ENCODE measurements at regions of chr14 and their contacts with region 1.

Region 1: GRCh38 chr14:77097700-77098528 is at the start of gene CIPC:
- DNase-seq: peak; percentile 100
- H3K4me3 ChIP-seq: peak within 1 kb of the TSS; percentile 67 to 92 (median 86)
- H3K27ac ChIP-seq: peak within 1 kb of the TSS; percentile 90 to 100 (median 96)
- H3K4me1 ChIP-seq: peaks cover 0 to 56% (median 50%) of the 10 kb centered on the region in 4 donors
- H3K27me3 ChIP-seq: no peaks in the 10 kb centered on the region
- CTCF ChIP-seq: no peak
- EP300 ChIP-seq: peak in 1 of 4 donors; percentile 86
- POLR2A ChIP-seq: peak; percentile 87 to 91
- total RNA-seq, gene CIPC: 59.7 to 96.1 (median 77.7) TPM

Region 2: GRCh38 chr14:76876076-76876475 is 221.8 kb before region 1 on chr14:
- intact Hi-C with region 1: loop called (anchors 1 kb)
- DNase-seq: peak; percentile 82
- H3K4me3 ChIP-seq: no peak overlapping the region
- H3K27ac ChIP-seq: no peak overlapping the region
- H3K4me1 ChIP-seq: no peaks in the 10 kb centered on the region
- H3K27me3 ChIP-seq: no peaks in the 10 kb centered on the region
- CTCF ChIP-seq: peak; percentile 90 to 95 (median 92)
- EP300 ChIP-seq: no peak
- POLR2A ChIP-seq: no peak

Region 3: DNA sequence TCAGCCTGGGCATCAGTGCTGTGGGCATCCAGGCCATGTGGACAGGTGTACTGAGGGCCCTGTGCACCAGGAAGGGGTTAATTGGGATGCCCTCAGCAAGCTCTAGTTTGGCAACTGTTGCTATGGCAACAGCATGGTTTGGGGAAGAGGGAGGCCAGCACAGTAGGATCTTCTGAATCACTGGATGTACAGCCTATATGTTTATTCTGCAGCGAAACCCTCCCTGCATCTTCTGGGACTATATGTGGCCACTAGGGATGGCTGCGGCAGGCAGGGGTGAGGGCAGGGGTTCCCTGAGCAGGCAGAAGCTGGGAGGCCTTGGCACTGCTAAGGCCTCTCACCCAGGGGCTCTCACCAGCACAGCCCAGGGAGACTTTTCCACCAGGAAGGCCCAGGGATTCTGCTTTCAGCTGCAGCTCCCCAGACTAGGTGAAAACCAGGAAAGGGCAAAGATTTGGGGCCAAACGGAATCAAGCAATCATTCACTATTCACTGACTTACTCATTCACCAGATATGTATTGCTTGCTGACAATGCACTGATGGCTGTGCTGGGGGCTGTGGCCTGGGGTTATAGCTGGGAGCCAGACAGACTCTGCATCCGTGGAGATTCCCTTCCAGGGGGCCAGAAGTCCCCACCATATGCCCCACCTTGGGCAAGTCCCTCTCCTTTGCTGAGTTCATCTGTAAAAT is 112.2 kb before region 1 on chr14:
- intact Hi-C with region 1: no loop called
- DNase-seq: no peak
- H3K4me3 ChIP-seq: no peak overlapping the region
- H3K27ac ChIP-seq: no peak overlapping the region
- H3K4me1 ChIP-seq: no peaks in the 10 kb centered on the region
- H3K27me3 ChIP-seq: no peaks in the 10 kb centered on the region
- CTCF ChIP-seq: no peak
- EP300 ChIP-seq: no peak
- POLR2A ChIP-seq: no peak

Region 4: DNA sequence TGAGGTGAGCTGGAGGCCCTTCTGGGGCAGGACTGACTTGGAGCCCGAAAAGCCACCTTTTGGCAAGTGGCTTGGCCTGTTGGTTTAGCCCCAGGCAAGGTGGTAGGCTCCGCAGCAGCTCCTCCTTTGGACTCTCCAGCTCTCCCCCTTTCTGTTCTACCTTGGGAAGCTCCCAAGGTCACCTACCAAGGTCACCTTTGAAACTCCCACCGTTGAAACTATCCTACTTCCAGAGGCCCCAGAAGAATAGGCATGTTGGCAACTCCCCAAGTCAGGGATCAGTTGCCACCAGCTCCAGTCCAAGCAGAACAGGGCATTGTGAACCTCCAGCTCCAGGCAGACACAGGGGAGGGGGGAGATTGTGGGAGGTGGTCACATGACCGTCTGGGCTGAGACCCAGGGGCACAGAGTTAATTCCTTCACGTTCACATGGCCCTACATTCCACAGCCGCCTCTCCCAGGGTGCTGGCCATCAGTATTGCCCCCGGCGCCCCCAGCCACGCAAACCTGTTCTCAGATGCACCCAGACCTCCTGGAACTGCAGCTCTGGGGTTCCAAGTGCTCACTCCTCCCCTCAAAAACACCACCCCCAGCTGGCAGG is 83.8 kb before region 1 on chr14:
- intact Hi-C with region 1: no loop called
- DNase-seq: peak; percentile 87
- H3K4me3 ChIP-seq: no peak overlapping the region
- H3K27ac ChIP-seq: peak overlapping the region in 3 of 4 donors; percentile 38 to 62 (median 60)
- H3K4me1 ChIP-seq: peaks cover 0 to 18% (median 15%) of the 10 kb centered on the region in 4 donors
- H3K27me3 ChIP-seq: no peaks in the 10 kb centered on the region
- CTCF ChIP-seq: no peak
- EP300 ChIP-seq: no peak
- POLR2A ChIP-seq: no peak

Region 5: DNA sequence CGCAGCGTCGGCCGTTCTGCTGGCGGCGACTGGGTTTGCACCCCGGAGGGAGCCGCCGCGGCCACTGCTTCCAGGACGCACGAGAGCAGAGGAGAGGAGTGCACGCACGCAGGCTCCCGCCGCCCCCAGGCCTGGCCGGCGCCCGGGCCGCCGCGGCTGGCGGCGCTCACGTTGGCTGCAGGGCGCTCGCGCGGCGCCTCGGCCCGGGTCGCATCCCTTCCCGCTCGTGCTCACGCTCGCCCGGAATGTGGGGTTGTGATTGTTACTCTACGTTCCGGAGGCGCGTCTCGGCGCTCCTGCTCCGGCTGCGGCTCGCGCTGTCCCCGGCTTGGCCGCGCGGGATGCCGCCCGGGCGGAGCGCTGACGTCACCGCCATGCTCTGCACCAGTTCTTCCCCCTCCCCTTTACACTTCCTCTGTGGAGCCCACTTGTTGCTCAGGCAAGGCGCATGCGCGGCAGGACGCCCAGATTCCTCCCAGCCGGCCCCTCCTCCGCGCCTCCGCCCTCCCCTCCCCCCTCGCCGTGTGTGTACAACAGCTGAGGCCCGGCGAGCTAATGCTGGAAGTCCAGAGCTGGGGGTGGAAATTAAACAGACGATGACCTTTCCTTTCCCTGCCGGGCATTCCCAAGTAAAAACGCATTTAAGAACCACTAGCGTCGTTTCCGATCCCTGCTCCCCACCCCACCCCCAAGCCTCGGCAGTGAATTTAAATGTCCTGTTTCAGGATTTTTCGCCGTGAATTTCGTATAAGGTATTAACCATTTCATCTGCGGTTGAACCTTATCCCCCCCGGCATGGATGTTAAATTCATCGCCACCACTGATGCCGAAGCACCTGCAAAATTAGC is 69.3 kb before region 1 on chr14 and contains the start of gene IRF2BPL:
- intact Hi-C with region 1: loop called (anchors 1 kb)
- DNase-seq: peak; percentile 100
- H3K4me3 ChIP-seq: peak within 1 kb of the TSS; percentile 85 to 96 (median 91)
- H3K27ac ChIP-seq: peak within 1 kb of the TSS; percentile 97 to 100 (median 100)
- H3K4me1 ChIP-seq: peaks cover 0 to 69% (median 52%) of the 10 kb centered on the region in 4 donors
- H3K27me3 ChIP-seq: no peaks in the 10 kb centered on the region
- CTCF ChIP-seq: no peak
- EP300 ChIP-seq: peak in 3 of 4 donors; percentile 71 to 94 (median 80)
- POLR2A ChIP-seq: peak; percentile 86 to 92
- total RNA-seq, gene IRF2BPL: 34.7 to 63.1 (median 57.9) TPM

Region 6: DNA sequence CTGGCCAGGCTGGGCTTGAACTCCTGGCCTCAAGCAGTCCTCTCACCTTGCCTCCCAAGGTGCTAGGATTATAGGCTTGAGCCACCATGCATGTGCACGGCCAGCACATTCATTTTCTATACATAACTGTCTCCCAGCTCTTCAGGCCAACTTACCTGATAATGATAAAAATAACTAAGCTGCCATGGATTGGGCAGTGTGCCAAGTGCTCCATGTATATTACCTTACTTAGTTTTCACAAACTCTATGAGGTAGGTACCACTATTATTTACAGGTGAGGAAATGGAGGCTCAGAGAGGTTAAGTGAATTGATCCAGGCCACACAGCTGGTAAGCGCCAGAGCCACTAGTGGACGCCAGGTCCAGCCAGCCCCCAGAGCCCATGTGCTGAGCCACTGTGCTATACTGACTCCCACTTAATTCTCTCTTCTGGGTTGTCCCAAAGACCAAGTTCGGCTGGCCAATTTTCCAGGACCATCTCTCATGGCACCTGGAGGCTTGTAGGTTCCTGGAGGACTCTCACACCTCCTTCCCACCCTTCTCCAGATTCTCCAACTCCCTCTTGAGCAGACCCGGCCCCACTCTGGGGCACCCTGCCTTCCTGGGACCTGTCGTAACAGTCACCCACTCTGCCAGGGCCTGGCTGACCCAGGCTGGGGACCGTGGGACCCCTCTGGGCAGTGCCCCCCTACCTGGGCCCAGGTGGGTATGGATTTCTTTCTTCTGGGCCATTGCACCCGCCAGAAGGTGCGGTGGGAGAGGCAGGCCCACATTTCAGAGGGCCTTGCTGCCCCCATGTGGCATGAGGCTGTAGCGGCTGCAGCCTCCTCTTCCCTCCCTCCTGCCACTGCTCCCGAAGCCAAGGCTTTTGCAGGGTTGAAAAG is 30.0 kb before region 1 on chr14:
- intact Hi-C with region 1: loop called (anchors 2 kb)
- DNase-seq: peak; percentile 89
- H3K4me3 ChIP-seq: no peak overlapping the region
- H3K27ac ChIP-seq: peak overlapping the region in 3 of 4 donors; percentile 17 to 54 (median 20)
- H3K4me1 ChIP-seq: peaks cover 0 to 29% (median 19%) of the 10 kb centered on the region in 4 donors
- H3K27me3 ChIP-seq: no peaks in the 10 kb centered on the region
- CTCF ChIP-seq: peak; percentile 82 to 90 (median 88)
- EP300 ChIP-seq: no peak
- POLR2A ChIP-seq: no peak

Region 7: GRCh38 chr14:77320238-77320935 is 222.5 kb after region 1 on chr14 and contains the start of gene POMT2:
- intact Hi-C with region 1: loop called (anchors 5 kb)
- DNase-seq: peak; percentile 97
- H3K4me3 ChIP-seq: peak within 1 kb of the TSS; percentile 87 to 99 (median 96)
- H3K27ac ChIP-seq: peak within 1 kb of the TSS; percentile 94 to 99 (median 96)
- H3K4me1 ChIP-seq: peaks cover 0 to 32% (median 28%) of the 10 kb centered on the region in 4 donors
- H3K27me3 ChIP-seq: no peaks in the 10 kb centered on the region
- CTCF ChIP-seq: peak in 3 of 4 experiments; percentile 13 to 52 (median 51)
- EP300 ChIP-seq: no peak
- POLR2A ChIP-seq: peak; percentile 32 to 41
- total RNA-seq, gene POMT2: 10.5 to 21.0 (median 16.4) TPM